ENCODE measurements at regions of chrX and their contacts with region 1.

Region 1: DNA sequence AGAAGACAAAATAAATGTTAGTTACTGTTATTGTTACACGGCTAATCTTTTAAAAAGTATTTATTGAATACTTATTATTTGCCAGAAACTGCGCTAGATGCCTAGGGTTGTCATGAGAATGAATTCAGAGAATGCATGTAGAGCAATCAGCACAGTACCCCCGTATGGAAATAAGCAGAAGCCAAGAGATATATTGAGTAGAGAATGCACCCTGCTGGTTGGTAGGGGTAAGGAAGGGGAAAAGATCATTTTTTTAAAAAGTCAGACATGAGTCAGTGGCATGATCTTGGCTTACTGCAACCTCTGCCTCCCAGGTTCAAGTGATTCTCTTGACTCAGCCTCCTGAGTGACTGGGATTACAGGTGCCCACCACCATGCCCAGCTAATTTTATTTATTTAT is 13.1 kb upstream of the DRP2 start:
- DNase-seq: peak in 3 of 14 experiments; percentile 21 to 28 (median 24)
- ATAC-seq: peak; percentile 58
- H3K4me3 ChIP-seq: no peak overlapping the region
- H3K4me3 Mint-ChIP-seq: no peak overlapping the region
- H3K27ac ChIP-seq: no peak overlapping the region
- H3K27ac Mint-ChIP-seq: no peak overlapping the region
- H3K4me1 ChIP-seq: peaks cover 4% of the 10 kb centered on the region
- H3K4me1 Mint-ChIP-seq: peaks cover 12% of the 10 kb centered on the region
- H3K27me3 ChIP-seq: no peaks in the 10 kb centered on the region
- H3K27me3 Mint-ChIP-seq: no peaks in the 10 kb centered on the region
- CTCF ChIP-seq: peak; percentile 26

Region 2: DNA sequence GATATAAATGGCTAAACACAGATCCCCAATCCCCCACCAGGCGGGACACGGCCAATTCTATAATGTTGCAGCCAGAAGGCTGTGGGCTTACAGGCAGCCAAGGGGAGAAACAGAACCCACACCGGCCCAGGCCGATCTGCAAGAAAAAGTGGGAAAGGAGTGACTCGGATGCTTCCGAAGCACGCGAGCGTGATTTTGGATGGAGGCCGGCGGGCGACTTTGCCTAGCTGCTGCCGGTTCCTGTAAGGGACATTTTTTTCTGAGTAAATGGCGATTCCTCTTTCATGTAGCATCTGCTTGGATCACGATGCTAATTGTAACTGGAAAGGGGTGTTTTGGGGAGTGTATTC is 1266.6 kb before region 1 on chrX:
- CTCF ChIA-PET with region 1: no interaction called
- POLR2A ChIA-PET with region 1: no interaction called
- intact Hi-C with region 1: no loop called
- DNase-seq: no peak
- ATAC-seq: no peak
- H3K4me3 ChIP-seq: no peak overlapping the region
- H3K4me3 Mint-ChIP-seq: no peak overlapping the region
- H3K27ac ChIP-seq: no peak overlapping the region
- H3K27ac Mint-ChIP-seq: no peak overlapping the region
- H3K4me1 ChIP-seq: no peaks in the 10 kb centered on the region
- H3K4me1 Mint-ChIP-seq: no peaks in the 10 kb centered on the region
- H3K27me3 ChIP-seq: no peaks in the 10 kb centered on the region
- H3K27me3 Mint-ChIP-seq: no peaks in the 10 kb centered on the region
- CTCF ChIP-seq: no peak

Region 3: DNA sequence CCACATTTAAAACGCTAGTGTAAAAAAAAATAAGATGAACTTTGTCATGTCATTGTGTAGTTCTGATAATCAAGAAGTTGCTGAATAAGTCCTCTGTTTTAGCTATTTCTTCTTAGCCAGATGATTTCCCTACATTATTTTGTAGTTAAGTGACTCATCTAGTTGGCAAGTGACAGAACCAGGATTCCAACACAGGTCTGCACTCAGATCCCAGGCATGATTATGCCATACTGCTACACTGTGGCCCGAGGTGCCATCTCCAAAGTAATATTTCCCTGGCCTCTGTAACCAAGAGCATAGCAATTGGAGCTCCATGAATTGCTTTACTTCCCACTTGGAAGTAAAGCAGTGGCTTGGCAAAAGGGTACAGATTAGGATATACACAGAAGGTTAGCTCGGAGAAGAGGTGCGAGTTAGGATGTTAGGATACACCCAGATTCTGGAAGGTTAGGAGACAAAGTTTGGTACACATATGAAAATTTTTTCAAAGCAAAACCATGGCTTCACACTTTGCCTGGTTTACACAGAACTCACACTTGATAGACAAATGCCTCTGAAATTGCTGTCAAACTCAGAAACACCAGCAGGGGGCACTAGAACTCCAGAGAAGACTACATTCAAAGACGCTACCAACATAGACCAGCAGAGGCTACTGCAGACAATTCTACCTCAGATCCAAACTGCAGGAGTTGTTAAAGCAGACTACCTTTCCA is 521.0 kb before region 1 on chrX:
- CTCF ChIA-PET with region 1: no interaction called
- POLR2A ChIA-PET with region 1: no interaction called
- intact Hi-C with region 1: loop called (anchors 5 to 10 kb)
- DNase-seq: peak; percentile 31 to 75 (median 45)
- ATAC-seq: peak; percentile 64
- H3K4me3 ChIP-seq: no peak overlapping the region
- H3K4me3 Mint-ChIP-seq: no peak overlapping the region
- H3K27ac ChIP-seq: no peak overlapping the region
- H3K27ac Mint-ChIP-seq: no peak overlapping the region
- H3K4me1 ChIP-seq: no peaks in the 10 kb centered on the region
- H3K4me1 Mint-ChIP-seq: no peaks in the 10 kb centered on the region
- H3K27me3 ChIP-seq: no peaks in the 10 kb centered on the region
- H3K27me3 Mint-ChIP-seq: peaks cover 6% of the 10 kb centered on the region
- CTCF ChIP-seq: peak; percentile 69

Region 4: GRCh38 chrX:100895365-100896075 is 311.0 kb before region 1 on chrX:
- CTCF ChIA-PET with region 1: no interaction called
- POLR2A ChIA-PET with region 1: no interaction called
- intact Hi-C with region 1: loop called in 1 of 2 experiments (anchors 2 kb)
- DNase-seq: peak in 10 of 14 experiments; percentile 0 to 43 (median 10)
- ATAC-seq: no peak
- H3K4me3 ChIP-seq: no peak overlapping the region
- H3K4me3 Mint-ChIP-seq: no peak overlapping the region
- H3K27ac ChIP-seq: no peak overlapping the region
- H3K27ac Mint-ChIP-seq: no peak overlapping the region
- H3K4me1 ChIP-seq: no peaks in the 10 kb centered on the region
- H3K4me1 Mint-ChIP-seq: no peaks in the 10 kb centered on the region
- H3K27me3 ChIP-seq: no peaks in the 10 kb centered on the region
- H3K27me3 Mint-ChIP-seq: no peaks in the 10 kb centered on the region
- CTCF ChIP-seq: peak; percentile 32

Measured in CD4-positive, alpha-beta T cell (primary cell).